CD14-positive monocyte (primary cell): ENCODE measurements at regions of chr22 and their contacts with region 1.

Region 1: GRCh38 chr22:30289134-30289979 is at the start of gene CASTOR1:
- DNase-seq: peak; percentile 86 to 93 (median 89)
- H3K4me3 ChIP-seq: peak within 1 kb of the TSS; percentile 54 to 82 (median 62)
- H3K4me3 Mint-ChIP-seq: peak within 1 kb of the TSS; percentile 83 to 86
- H3K27ac ChIP-seq: peak within 1 kb of the TSS; percentile 31 to 46
- H3K27ac Mint-ChIP-seq: peak within 1 kb of the TSS; percentile 58 to 90 (median 82)
- H3K4me1 ChIP-seq: peaks cover 26 to 44% of the 10 kb centered on the region in 2 donors
- H3K4me1 Mint-ChIP-seq: peaks cover 33% of the 10 kb centered on the region
- H3K27me3 ChIP-seq: no peaks in the 10 kb centered on the region
- H3K27me3 Mint-ChIP-seq: peaks cover 0 to 3% (median 1%) of the 10 kb centered on the region in 3 donors
- CTCF ChIP-seq: no peak
- polyA plus RNA-seq, gene CASTOR1: 6.4 to 15.5 (median 6.5) TPM

Region 2: GRCh38 chr22:30253205-30253852 is 36.0 kb before region 1 on chr22:
- intact Hi-C with region 1: loop called in 1 of 2 experiments (anchors 1 kb)
- DNase-seq: no peak
- H3K4me3 ChIP-seq: no peak overlapping the region
- H3K4me3 Mint-ChIP-seq: no peak overlapping the region
- H3K27ac ChIP-seq: no peak overlapping the region
- H3K27ac Mint-ChIP-seq: peak overlapping the region in 5 of 7 donors; percentile 4 to 79 (median 51)
- H3K4me1 ChIP-seq: peaks cover 16 to 28% of the 10 kb centered on the region in 2 donors
- H3K4me1 Mint-ChIP-seq: peaks cover 33% of the 10 kb centered on the region
- H3K27me3 ChIP-seq: peaks cover 0 to 5% of the 10 kb centered on the region in 2 donors
- H3K27me3 Mint-ChIP-seq: peaks cover 9 to 18% (median 12%) of the 10 kb centered on the region in 3 donors
- CTCF ChIP-seq: no peak

Region 3: DNA sequence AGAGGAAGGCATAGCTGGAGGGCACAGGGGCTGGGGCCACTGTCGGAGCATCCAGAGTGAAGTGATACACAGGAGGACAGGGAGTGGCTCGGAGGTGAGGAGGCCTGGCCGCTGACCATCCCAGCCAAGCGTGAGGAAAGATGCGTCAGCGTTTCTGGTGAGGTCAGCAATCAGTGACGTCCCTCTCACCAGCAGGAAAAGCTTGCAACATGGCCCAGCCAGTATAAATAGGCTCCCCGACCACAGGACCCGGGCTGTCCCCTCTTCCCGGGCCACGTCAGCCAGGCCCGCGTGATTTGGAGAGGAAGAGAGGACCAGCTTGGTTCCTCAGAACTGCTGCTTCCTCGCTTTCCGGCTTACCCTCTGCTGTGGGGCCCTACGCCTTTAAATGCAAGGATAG is 18.5 kb before region 1 on chr22:
- intact Hi-C with region 1: loop called in 1 of 2 experiments (anchors 1 kb)
- DNase-seq: peak; percentile 99 to 100 (median 99)
- H3K4me3 ChIP-seq: peak overlapping the region in 1 of 3 experiments; percentile 40
- H3K4me3 Mint-ChIP-seq: peak overlapping the region; percentile 68 to 79
- H3K27ac ChIP-seq: peak overlapping the region; percentile 82 to 89
- H3K27ac Mint-ChIP-seq: peak overlapping the region; percentile 92 to 99 (median 99)
- H3K4me1 ChIP-seq: peaks cover 80 to 99% of the 10 kb centered on the region in 2 donors
- H3K4me1 Mint-ChIP-seq: peaks cover 90% of the 10 kb centered on the region
- H3K27me3 ChIP-seq: peaks cover 0 to 6% of the 10 kb centered on the region in 2 donors
- H3K27me3 Mint-ChIP-seq: peaks cover 9 to 27% (median 20%) of the 10 kb centered on the region in 3 donors
- CTCF ChIP-seq: no peak

Region 4: GRCh38 chr22:30386960-30387827 is 97.8 kb after region 1 on chr22 and contains the start of gene RNF215:
- intact Hi-C with region 1: loop called (anchors 1 to 2 kb)
- DNase-seq: peak; percentile 76 to 82 (median 81)
- H3K4me3 ChIP-seq: peak within 1 kb of the TSS; percentile 14 to 75 (median 51)
- H3K4me3 Mint-ChIP-seq: peak within 1 kb of the TSS; percentile 82 to 88
- H3K27ac ChIP-seq: no peak within 1 kb of the TSS
- H3K27ac Mint-ChIP-seq: peak within 1 kb of the TSS in 6 of 7 donors; percentile 60 to 88 (median 80)
- H3K4me1 ChIP-seq: peaks cover 10% of the 10 kb centered on the region in 2 donors
- H3K4me1 Mint-ChIP-seq: peaks cover 14% of the 10 kb centered on the region
- H3K27me3 ChIP-seq: no peaks in the 10 kb centered on the region
- H3K27me3 Mint-ChIP-seq: peaks cover 3 to 8% (median 4%) of the 10 kb centered on the region in 3 donors
- CTCF ChIP-seq: peak; percentile 97
- polyA plus RNA-seq, gene RNF215: 0.26 to 12.2 (median 0.42) TPM